ENCODE measurements at regions of chr7 and their contacts with region 1.

Region 1: GRCh38 chr7:51162724-51163329 is 153.8 kb downstream of the COBL start:
- DNase-seq: peak; percentile 18 to 66 (median 54)
- ATAC-seq: peak; percentile 77
- H3K4me3 ChIP-seq: no peak overlapping the region
- H3K4me3 Mint-ChIP-seq: peak overlapping the region in 2 of 10 donors; percentile 7 to 44
- H3K27ac ChIP-seq: no peak overlapping the region
- H3K27ac Mint-ChIP-seq: no peak overlapping the region
- H3K4me1 ChIP-seq: no peaks in the 10 kb centered on the region
- H3K4me1 Mint-ChIP-seq: peaks cover 0 to 5% (median 5%) of the 10 kb centered on the region in 7 donors
- H3K27me3 ChIP-seq: no peaks in the 10 kb centered on the region
- H3K27me3 Mint-ChIP-seq: peaks cover 21 to 39% (median 32%) of the 10 kb centered on the region in 5 donors

Region 2: GRCh38 chr7:50142425-50143017 is 1020.3 kb before region 1 on chr7:
- CTCF ChIA-PET with region 1: interaction called, 3 read pairs
- POLR2A ChIA-PET with region 1: no interaction called
- intact Hi-C with region 1: loop called in 1 of 2 experiments (anchors 2 kb)
- DNase-seq: peak in 7 of 9 donors; percentile 43 to 72 (median 62)
- ATAC-seq: peak; percentile 83
- H3K4me3 ChIP-seq: no peak overlapping the region
- H3K4me3 Mint-ChIP-seq: peak overlapping the region in 9 of 10 donors; percentile 13 to 86 (median 64)
- H3K27ac ChIP-seq: peak overlapping the region; percentile 55
- H3K27ac Mint-ChIP-seq: peak overlapping the region in 8 of 9 donors; percentile 16 to 91 (median 62)
- H3K4me1 ChIP-seq: peaks cover 3% of the 10 kb centered on the region in 2 donors
- H3K4me1 Mint-ChIP-seq: peaks cover 0 to 37% (median 12%) of the 10 kb centered on the region in 7 donors
- H3K27me3 ChIP-seq: no peaks in the 10 kb centered on the region
- H3K27me3 Mint-ChIP-seq: peaks cover 0 to 18% (median 0%) of the 10 kb centered on the region in 5 donors

Region 3: GRCh38 chr7:50679218-50680007 is 483.4 kb before region 1 on chr7:
- CTCF ChIA-PET with region 1: interaction called, 4 read pairs
- POLR2A ChIA-PET with region 1: no interaction called
- intact Hi-C with region 1: loop called in 1 of 2 experiments (anchors 1 kb)
- DNase-seq: peak in 6 of 9 donors; percentile 27 to 59 (median 54)
- ATAC-seq: peak; percentile 73
- H3K4me3 ChIP-seq: no peak overlapping the region
- H3K4me3 Mint-ChIP-seq: no peak overlapping the region
- H3K27ac ChIP-seq: no peak overlapping the region
- H3K27ac Mint-ChIP-seq: no peak overlapping the region
- H3K4me1 ChIP-seq: no peaks in the 10 kb centered on the region
- H3K4me1 Mint-ChIP-seq: peaks cover 0 to 5% (median 0%) of the 10 kb centered on the region in 7 donors
- H3K27me3 ChIP-seq: no peaks in the 10 kb centered on the region
- H3K27me3 Mint-ChIP-seq: peaks cover 0 to 22% (median 0%) of the 10 kb centered on the region in 5 donors

Region 4: GRCh38 chr7:50782384-50783208 is 380.2 kb before region 1 on chr7 and contains the start of gene GRB10:
- CTCF ChIA-PET with region 1: no interaction called
- POLR2A ChIA-PET with region 1: no interaction called
- intact Hi-C with region 1: loop called in 1 of 2 experiments (anchors 5 kb)
- DNase-seq: peak in 3 of 9 donors; percentile 13 to 18 (median 16)
- ATAC-seq: peak; percentile 61
- H3K4me3 ChIP-seq: peak within 1 kb of the TSS; percentile 48
- H3K4me3 Mint-ChIP-seq: peak within 1 kb of the TSS; percentile 65 to 89 (median 84)
- H3K27ac ChIP-seq: no peak within 1 kb of the TSS
- H3K27ac Mint-ChIP-seq: peak within 1 kb of the TSS in 8 of 9 donors; percentile 67 to 95 (median 82)
- H3K4me1 ChIP-seq: peaks cover 0 to 9% of the 10 kb centered on the region in 2 donors
- H3K4me1 Mint-ChIP-seq: peaks cover 6 to 41% (median 26%) of the 10 kb centered on the region in 7 donors
- H3K27me3 ChIP-seq: no peaks in the 10 kb centered on the region
- H3K27me3 Mint-ChIP-seq: peaks cover 15 to 51% (median 24%) of the 10 kb centered on the region in 5 donors
- total RNA-seq, gene GRB10: 3.4 to 10.6 (median 7.2) TPM

Region 5: DNA sequence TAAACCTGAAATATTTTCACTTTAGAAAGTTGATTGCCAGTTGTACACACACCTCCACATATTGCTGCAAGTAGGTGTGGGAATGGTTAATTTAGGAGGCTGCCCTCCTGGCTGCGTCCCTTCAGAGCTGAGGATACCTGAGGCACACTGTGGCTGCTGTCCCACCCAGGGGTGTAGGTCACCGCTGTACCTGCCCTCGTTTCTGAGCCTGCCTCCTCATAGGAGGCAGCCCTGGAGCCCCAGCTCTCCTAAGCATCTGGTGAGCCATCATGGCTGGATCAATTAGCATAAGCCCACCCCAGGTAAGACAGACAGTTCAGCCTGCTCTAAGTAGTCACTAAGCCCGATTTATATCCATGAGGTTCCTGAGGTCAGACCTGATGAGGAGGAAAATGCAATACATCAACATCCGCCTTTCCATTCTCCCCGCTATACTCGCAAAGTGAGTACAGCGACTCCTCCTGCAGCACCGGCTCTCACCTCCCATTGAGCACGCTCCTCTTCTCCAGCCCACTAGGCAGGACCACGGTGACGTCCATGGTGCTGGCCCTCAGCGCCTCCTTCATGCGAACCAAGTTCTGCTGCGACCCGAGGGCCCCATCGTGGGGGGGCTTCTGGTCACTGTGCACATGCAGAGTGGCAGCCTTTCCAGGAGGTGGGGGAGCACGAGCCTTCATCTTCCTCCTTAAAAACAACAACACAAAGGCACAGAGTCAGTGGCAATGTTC is 56.6 kb after region 1 on chr7:
- CTCF ChIA-PET with region 1: no interaction called
- POLR2A ChIA-PET with region 1: no interaction called
- intact Hi-C with region 1: no loop called
- DNase-seq: no peak
- ATAC-seq: no peak
- H3K4me3 ChIP-seq: no peak overlapping the region
- H3K4me3 Mint-ChIP-seq: no peak overlapping the region
- H3K27ac ChIP-seq: no peak overlapping the region
- H3K27ac Mint-ChIP-seq: no peak overlapping the region
- H3K4me1 ChIP-seq: no peaks in the 10 kb centered on the region
- H3K4me1 Mint-ChIP-seq: no peaks in the 10 kb centered on the region
- H3K27me3 ChIP-seq: no peaks in the 10 kb centered on the region
- H3K27me3 Mint-ChIP-seq: no peaks in the 10 kb centered on the region

Region 6: DNA sequence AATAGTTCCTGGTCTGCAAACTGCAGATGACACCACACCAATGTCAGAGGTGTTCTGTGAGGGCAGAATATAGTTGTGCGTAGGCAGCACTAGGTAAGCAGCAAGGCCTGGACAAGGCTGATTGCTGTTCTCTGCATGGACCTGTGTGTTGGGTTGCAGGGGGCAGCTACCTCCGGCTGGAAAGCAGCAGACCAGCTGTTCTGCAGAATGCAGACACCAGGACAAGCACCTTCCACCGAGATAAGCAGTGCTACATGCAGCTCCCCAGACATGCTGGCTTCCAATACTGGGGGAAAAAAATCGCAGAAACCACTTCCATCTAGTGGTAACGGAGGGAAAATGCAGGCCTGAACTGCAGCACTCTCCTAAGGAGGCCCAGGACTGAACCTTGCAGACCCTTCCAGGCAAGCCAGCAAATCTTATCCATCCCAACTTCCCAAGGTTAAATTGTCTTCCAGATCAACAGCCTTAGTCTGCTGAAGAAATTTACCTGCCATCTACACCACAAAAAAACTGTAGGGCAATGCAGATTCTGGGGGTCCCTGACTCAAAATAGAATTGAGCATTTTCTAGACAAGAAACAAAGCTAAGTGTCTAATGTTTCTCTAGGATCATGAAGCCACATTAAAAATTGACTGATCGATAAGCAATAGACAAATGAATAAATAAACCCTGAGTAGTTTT is 204.2 kb after region 1 on chr7:
- CTCF ChIA-PET with region 1: interaction called, 3 read pairs
- POLR2A ChIA-PET with region 1: no interaction called
- intact Hi-C with region 1: loop called (anchors 1 kb)
- DNase-seq: peak in 1 of 9 donors; percentile 12
- ATAC-seq: no peak
- H3K4me3 ChIP-seq: no peak overlapping the region
- H3K4me3 Mint-ChIP-seq: no peak overlapping the region
- H3K27ac ChIP-seq: no peak overlapping the region
- H3K27ac Mint-ChIP-seq: no peak overlapping the region
- H3K4me1 ChIP-seq: no peaks in the 10 kb centered on the region
- H3K4me1 Mint-ChIP-seq: no peaks in the 10 kb centered on the region
- H3K27me3 ChIP-seq: no peaks in the 10 kb centered on the region
- H3K27me3 Mint-ChIP-seq: peaks cover 0 to 6% (median 0%) of the 10 kb centered on the region in 5 donors

Region 7: GRCh38 chr7:51629206-51629605 is 466.4 kb after region 1 on chr7:
- CTCF ChIA-PET with region 1: no interaction called
- POLR2A ChIA-PET with region 1: no interaction called
- intact Hi-C with region 1: no loop called
- DNase-seq: no peak
- ATAC-seq: no peak
- H3K4me3 ChIP-seq: no peak overlapping the region
- H3K4me3 Mint-ChIP-seq: no peak overlapping the region
- H3K27ac ChIP-seq: no peak overlapping the region
- H3K27ac Mint-ChIP-seq: no peak overlapping the region
- H3K4me1 ChIP-seq: no peaks in the 10 kb centered on the region
- H3K4me1 Mint-ChIP-seq: no peaks in the 10 kb centered on the region
- H3K27me3 ChIP-seq: no peaks in the 10 kb centered on the region
- H3K27me3 Mint-ChIP-seq: peaks cover 0 to 5% (median 0%) of the 10 kb centered on the region in 5 donors

Measured in naive thymus-derived CD4-positive, alpha-beta T cell (primary cell).